ENCODE measurements at regions of chr12 and their contacts with region 1.

Region 1: DNA sequence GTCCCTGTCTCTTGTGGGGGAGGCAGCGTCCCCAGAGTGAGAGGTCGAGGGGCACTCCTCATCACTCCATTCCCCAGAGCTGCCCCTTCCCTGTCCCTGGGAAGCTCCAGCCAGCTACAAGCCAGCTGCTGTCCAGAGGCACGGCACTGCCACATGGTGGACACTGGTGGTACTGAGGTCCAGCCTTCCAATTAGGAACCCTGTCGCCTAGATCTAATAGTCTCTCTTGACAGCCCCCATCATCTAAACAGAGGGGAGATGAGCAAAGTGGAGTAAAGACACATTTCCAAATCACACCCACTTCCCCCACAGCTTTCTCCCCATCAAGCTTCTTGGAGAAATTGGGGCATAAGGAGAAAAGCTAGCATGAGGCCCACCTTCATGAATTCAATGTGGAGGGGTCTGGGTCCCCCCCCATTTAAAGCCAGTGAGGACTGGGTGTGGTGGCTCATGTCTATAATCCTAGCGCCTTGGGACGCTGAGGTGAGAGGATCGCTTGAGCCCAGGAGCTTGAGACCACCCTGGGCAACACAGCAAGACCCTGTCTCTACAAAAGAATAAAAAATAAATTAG is 2.1 kb upstream of the INHBE start:
- DNase-seq: no peak
- H3K4me3 ChIP-seq: no peak overlapping the region
- H3K27me3 ChIP-seq: no peaks in the 10 kb centered on the region
- CTCF ChIP-seq: peak; percentile 96

Region 2: GRCh38 chr12:57213058-57213715 is 239.8 kb before region 1 on chr12:
- CTCF ChIA-PET with region 1: interaction called, 10 read pairs
- POLR2A ChIA-PET with region 1: no interaction called
- DNase-seq: peak; percentile 42
- H3K4me3 ChIP-seq: no peak overlapping the region
- H3K27me3 ChIP-seq: peaks cover 4% of the 10 kb centered on the region; the same call in 1 of the 2 replicates
- CTCF ChIP-seq: peak; percentile 97

Region 3: DNA sequence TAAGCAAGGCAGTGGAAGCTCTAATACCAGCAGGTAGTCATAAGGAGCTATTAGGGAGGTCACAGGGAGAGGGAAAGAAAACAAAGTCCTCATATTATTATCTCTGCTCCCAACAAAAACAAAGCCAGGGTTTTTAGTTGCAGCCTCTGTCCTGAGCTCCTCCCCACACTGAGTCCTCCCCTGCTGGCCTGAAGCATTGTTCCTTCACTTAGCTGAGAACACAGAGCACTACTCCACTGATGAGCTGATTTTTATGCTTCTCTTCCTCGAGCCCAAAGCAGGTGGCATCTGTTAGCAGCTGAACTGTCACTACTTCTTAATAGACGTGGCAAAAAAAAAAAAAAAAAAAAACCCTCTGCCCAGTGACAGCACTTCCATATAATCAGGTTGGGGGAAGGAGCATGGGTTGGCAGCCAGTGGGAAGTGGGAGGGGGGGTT is 191.6 kb before region 1 on chr12:
- CTCF ChIA-PET with region 1: interaction called, 142 read pairs
- POLR2A ChIA-PET with region 1: no interaction called
- DNase-seq: no peak
- H3K4me3 ChIP-seq: no peak overlapping the region
- H3K27me3 ChIP-seq: no peaks in the 10 kb centered on the region
- CTCF ChIP-seq: no peak

Region 4: GRCh38 chr12:57299514-57300016 is 153.5 kb before region 1 on chr12:
- CTCF ChIA-PET with region 1: interaction called, 411 read pairs
- POLR2A ChIA-PET with region 1: no interaction called
- DNase-seq: no peak
- H3K4me3 ChIP-seq: no peak overlapping the region
- H3K27me3 ChIP-seq: no peaks in the 10 kb centered on the region
- CTCF ChIP-seq: no peak

Region 5: GRCh38 chr12:57430112-57430930 is 22.7 kb before region 1 on chr12:
- CTCF ChIA-PET with region 1: interaction called, 19 read pairs
- POLR2A ChIA-PET with region 1: interaction called, 3 read pairs
- DNase-seq: no peak
- H3K4me3 ChIP-seq: peak overlapping the region; percentile 55
- H3K27me3 ChIP-seq: no peaks in the 10 kb centered on the region; the same call in 1 of the 2 replicates
- CTCF ChIP-seq: no peak

Region 6: GRCh38 chr12:58364389-58365086 is 911.5 kb after region 1 on chr12:
- CTCF ChIA-PET with region 1: no interaction called
- POLR2A ChIA-PET with region 1: no interaction called
- DNase-seq: peak; percentile 98
- H3K4me3 ChIP-seq: no peak overlapping the region
- H3K27me3 ChIP-seq: no peaks in the 10 kb centered on the region
- CTCF ChIP-seq: no peak

Measured in BJ (cell line).